Activated CD8-positive, alpha-beta T cell treated with anti-CD3 and anti-CD28 coated beads for 36 hours (primary cell): ENCODE measurements at regions of chr10 and their contacts with region 1.

Region 1: DNA sequence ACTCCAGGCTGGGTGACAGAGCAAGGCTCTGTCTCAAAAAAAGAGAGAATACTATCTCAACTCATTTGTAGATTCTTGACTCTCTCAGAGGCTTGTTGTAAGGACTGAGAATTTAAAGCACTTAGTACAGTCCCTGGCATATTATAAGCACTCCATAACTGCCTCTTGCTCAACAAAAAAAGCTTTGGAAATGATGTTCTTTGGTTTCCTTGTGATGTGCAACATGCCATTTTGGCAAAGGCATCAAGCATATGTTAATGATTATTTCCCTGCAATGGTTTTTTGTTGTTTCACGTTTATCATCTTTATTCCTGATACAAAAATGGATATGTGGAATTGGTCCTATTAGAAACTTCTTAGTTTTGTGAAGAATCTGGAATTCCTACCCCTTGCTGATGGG is 15.7 kb downstream of the NOLC1 start:
- DNase-seq: no peak
- ATAC-seq: no peak
- H3K4me3 Mint-ChIP-seq: no peak overlapping the region
- H3K27ac Mint-ChIP-seq: no peak overlapping the region
- H3K4me1 Mint-ChIP-seq: peaks cover 5% of the 10 kb centered on the region
- H3K27me3 Mint-ChIP-seq: no peaks in the 10 kb centered on the region
- CTCF ChIP-seq: no peak

Region 2: GRCh38 chr10:102185811-102186527 is 18.1 kb after region 1 on chr10:
- CTCF ChIA-PET with region 1: interaction called, 24 read pairs
- POLR2A ChIA-PET with region 1: no interaction called
- intact Hi-C with region 1: no loop called
- DNase-seq: no peak
- ATAC-seq: no peak
- H3K4me3 Mint-ChIP-seq: no peak overlapping the region
- H3K27ac Mint-ChIP-seq: no peak overlapping the region
- H3K4me1 Mint-ChIP-seq: peaks cover 12% of the 10 kb centered on the region
- H3K27me3 Mint-ChIP-seq: no peaks in the 10 kb centered on the region
- CTCF ChIP-seq: no peak